ENCODE measurements at regions of chr2 and their contacts with region 1.

Region 1: DNA sequence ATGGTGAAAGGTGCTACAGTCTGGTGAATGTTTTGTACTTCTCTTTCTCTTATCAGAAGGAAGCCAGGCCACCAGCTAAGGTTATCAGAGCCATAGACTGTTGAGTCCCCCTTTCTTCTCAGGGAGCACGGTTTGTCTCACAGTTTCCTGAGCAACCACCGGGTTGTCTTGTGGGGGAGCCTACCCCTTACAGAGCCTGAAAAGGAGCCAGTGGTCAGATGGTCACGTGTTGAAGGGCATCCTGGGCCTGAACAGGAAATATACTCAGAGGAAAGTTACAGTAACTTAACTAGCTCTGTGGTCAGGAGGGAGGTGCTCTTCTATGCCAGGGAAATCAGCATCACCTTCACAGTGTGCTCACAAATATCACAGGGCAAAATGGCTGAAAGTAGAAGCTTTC is 11.6 kb downstream of the CD28 start:
- DNase-seq: peak; percentile 65 to 82 (median 70)
- H3K4me3 ChIP-seq: peak overlapping the region in 1 of 2 donors; percentile 32
- H3K4me3 Mint-ChIP-seq: peak overlapping the region; percentile 75 to 92 (median 80)
- H3K27ac ChIP-seq: peak overlapping the region; percentile 52
- H3K27ac Mint-ChIP-seq: peak overlapping the region; percentile 94 to 98 (median 95)
- H3K4me1 ChIP-seq: peaks cover 100% of the 10 kb centered on the region
- H3K4me1 Mint-ChIP-seq: peaks cover 86 to 99% (median 93%) of the 10 kb centered on the region in 4 donors
- H3K27me3 ChIP-seq: no peaks in the 10 kb centered on the region
- H3K27me3 Mint-ChIP-seq: no peaks in the 10 kb centered on the region

Region 2: DNA sequence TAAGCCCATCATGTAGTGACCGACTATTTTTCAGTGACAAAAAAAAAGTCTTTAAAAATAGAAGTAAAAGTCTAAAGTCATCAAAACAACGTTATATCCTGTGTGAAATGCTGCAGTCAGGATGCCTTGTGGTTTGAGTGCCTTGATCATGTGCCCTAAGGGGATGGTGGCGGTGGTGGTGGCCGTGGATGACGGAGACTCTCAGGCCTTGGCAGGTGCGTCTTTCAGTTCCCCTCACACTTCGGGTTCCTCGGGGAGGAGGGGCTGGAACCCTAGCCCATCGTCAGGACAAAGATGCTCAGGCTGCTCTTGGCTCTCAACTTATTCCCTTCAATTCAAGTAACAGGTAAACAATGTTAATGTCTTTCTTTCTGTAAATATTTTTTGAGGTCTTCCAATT is 11.7 kb before region 1 on chr2 and contains the start of gene CD28:
- CTCF ChIA-PET with region 1: interaction called, 33 read pairs
- POLR2A ChIA-PET with region 1: interaction called, 417 read pairs
- intact Hi-C with region 1: loop called (anchors 1 kb)
- DNase-seq: peak; percentile 94 to 96 (median 94)
- H3K4me3 ChIP-seq: peak within 1 kb of the TSS; percentile 78 to 90
- H3K4me3 Mint-ChIP-seq: peak within 1 kb of the TSS; percentile 86 to 99 (median 92)
- H3K27ac ChIP-seq: peak within 1 kb of the TSS; percentile 94
- H3K27ac Mint-ChIP-seq: peak within 1 kb of the TSS; percentile 93 to 100 (median 99)
- H3K4me1 ChIP-seq: peaks cover 44% of the 10 kb centered on the region
- H3K4me1 Mint-ChIP-seq: peaks cover 42 to 75% (median 55%) of the 10 kb centered on the region in 4 donors
- H3K27me3 ChIP-seq: no peaks in the 10 kb centered on the region
- H3K27me3 Mint-ChIP-seq: no peaks in the 10 kb centered on the region
- total RNA-seq, gene CD28: 203 to 222 TPM

Region 3: DNA sequence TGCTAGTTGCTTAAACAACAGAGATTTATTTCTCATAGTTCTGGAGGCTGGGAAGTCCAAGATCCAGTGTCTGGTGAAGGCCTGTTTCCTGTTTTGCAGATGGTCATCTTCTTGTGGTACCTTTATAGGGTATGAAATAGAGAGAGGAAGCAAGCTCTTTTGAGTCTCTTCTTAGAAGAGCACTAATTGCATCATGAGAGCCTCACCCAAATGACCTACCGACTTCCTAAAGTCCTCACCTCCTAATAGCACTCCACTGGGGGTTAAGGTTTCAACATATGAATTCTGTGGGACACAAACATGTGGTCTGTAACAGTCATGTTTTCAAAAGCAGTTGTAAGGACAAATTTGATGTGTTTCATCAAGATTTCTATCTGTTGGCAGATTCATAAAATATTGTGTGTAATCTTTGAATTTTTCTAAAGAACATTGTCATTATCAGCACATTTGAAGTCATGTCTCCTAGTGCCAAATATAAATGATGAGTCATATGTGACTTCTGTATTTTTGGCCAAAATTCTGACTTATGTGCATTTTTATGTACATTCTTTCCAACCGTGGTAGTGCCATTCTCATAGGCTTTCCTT is 33.7 kb after region 1 on chr2:
- CTCF ChIA-PET with region 1: interaction called, 11 read pairs
- POLR2A ChIA-PET with region 1: interaction called, 794 read pairs
- intact Hi-C with region 1: no loop called
- DNase-seq: no peak
- H3K4me3 ChIP-seq: no peak overlapping the region
- H3K4me3 Mint-ChIP-seq: peak overlapping the region in 5 of 8 donors; percentile 15 to 63 (median 32)
- H3K27ac ChIP-seq: no peak overlapping the region
- H3K27ac Mint-ChIP-seq: peak overlapping the region in 5 of 7 donors; percentile 34 to 80 (median 54)
- H3K4me1 ChIP-seq: peaks cover 47% of the 10 kb centered on the region
- H3K4me1 Mint-ChIP-seq: peaks cover 42 to 69% (median 56%) of the 10 kb centered on the region in 4 donors
- H3K27me3 ChIP-seq: no peaks in the 10 kb centered on the region
- H3K27me3 Mint-ChIP-seq: no peaks in the 10 kb centered on the region

Region 4: DNA sequence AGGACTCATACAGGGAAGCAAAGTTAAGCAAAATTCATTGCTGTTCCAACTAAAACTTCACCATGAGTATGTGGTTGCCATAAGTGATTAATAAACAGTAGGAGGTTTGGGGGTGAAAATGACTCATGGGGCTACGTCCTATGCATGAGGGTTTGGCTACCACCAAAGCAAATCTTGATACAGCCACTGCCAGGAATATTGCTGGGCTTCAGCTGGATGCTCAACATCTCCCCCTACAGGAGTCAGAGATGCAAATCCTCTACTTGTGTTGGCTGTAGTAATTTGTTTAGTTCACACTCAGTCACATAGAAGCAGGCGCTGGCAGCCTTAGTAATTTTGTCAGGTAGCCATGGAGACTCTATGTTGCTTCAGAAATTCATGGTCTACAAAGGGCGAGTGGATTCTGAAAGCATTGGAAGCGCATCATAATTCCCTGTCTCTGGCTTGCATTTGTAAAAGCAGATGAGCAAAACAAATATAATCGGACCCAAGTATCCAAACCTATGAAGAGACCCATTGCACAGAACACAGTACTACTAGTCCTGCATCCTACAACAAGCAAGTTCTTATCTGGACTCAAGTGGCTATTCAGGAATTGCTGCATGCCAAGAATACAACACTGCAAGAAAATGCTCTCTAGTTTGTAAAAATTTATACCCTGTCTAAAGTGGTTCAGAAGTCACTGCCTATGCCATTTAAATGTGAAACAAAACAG is 64.3 kb after region 1 on chr2:
- CTCF ChIA-PET with region 1: interaction called, 7 read pairs
- POLR2A ChIA-PET with region 1: interaction called, 23 read pairs
- intact Hi-C with region 1: loop called (anchors 2 kb)
- DNase-seq: peak; percentile 67 to 79 (median 69)
- H3K4me3 ChIP-seq: no peak overlapping the region
- H3K4me3 Mint-ChIP-seq: peak overlapping the region in 3 of 8 donors; percentile 24 to 66 (median 30)
- H3K27ac ChIP-seq: no peak overlapping the region
- H3K27ac Mint-ChIP-seq: peak overlapping the region in 6 of 7 donors; percentile 44 to 85 (median 70)
- H3K4me1 ChIP-seq: peaks cover 20% of the 10 kb centered on the region
- H3K4me1 Mint-ChIP-seq: peaks cover 31 to 55% (median 40%) of the 10 kb centered on the region in 4 donors
- H3K27me3 ChIP-seq: no peaks in the 10 kb centered on the region
- H3K27me3 Mint-ChIP-seq: no peaks in the 10 kb centered on the region

Region 5: DNA sequence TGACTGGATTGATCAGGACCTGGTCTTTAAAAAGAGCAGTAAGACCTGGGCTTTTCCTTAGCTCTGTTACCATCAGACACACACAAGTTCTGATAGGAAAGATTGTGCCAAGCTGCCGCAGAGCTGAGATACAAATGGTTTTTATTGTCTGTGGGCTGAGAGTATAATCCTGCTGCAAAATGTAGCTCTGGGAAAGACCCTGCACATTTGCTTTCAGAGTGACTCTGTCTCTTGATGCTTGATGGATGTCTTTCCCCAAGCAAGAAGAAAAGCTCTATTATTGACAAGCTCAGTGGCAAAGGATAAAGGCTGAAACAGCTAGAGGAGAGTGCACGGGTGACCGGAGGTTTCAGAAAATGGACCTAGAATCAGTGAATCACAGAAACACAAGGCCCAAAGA is 731.9 kb after region 1 on chr2:
- CTCF ChIA-PET with region 1: no interaction called
- POLR2A ChIA-PET with region 1: no interaction called
- intact Hi-C with region 1: no loop called
- DNase-seq: no peak
- H3K4me3 ChIP-seq: no peak overlapping the region
- H3K4me3 Mint-ChIP-seq: no peak overlapping the region
- H3K27ac ChIP-seq: no peak overlapping the region
- H3K27ac Mint-ChIP-seq: no peak overlapping the region
- H3K4me1 ChIP-seq: no peaks in the 10 kb centered on the region
- H3K4me1 Mint-ChIP-seq: no peaks in the 10 kb centered on the region
- H3K27me3 ChIP-seq: no peaks in the 10 kb centered on the region
- H3K27me3 Mint-ChIP-seq: peaks cover 0 to 4% of the 10 kb centered on the region in 2 donors

Measured in CD4-positive, alpha-beta memory T cell (primary cell).